B cell (primary cell): ENCODE measurements at regions of chr11 and their contacts with region 1.

Region 1: DNA sequence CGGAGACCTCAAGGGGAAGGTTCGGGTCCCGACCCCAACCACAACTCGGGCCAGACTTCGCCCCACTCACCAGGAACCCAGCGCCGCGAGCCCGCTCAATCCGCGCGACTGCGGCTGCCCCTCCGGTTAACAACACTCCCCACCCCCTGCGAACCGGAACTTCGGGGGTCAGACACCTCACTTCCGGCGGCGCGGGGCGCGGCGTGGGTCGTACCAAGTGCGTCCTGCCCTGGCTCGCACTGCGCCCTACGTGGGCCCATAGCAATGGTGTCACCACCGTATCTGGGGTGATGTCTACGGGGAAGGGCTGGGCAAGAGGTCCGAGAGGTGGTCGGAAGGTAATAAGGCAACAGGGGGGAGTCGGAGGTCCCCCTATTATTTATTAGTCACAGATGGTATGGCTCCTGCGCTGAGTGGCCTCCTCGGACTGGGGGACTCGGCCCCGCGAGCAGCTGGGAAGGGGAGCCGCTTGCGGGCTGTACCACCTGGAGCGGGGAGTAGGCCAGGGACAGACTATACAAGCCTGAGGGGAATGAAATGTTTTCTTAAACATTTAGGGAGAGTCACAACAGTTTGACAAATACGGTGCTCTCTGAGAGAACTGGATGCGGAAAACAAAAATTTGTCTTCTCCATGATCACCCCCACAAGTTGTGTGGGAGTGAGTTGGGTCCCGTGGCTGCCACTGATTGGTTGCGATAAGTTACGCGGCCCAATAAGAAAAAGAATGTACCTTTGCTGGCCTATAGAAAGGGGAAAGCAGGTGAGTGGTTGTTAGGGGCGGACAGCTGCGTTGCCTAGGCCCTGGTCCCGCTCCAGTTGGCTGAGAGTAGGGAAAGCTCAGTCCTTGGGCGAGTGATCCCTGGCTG is at the start of gene SYVN1:
- DNase-seq: peak; percentile 97
- ATAC-seq: peak; percentile 64
- H3K4me3 ChIP-seq: peak within 1 kb of the TSS; percentile 81 to 99 (median 96)
- H3K4me3 Mint-ChIP-seq: peak within 1 kb of the TSS; percentile 97
- H3K27ac ChIP-seq: peak within 1 kb of the TSS; percentile 98 to 99
- H3K27ac Mint-ChIP-seq: peak within 1 kb of the TSS; percentile 99
- H3K4me1 ChIP-seq: peaks cover 36 to 57% of the 10 kb centered on the region in 2 donors
- H3K4me1 Mint-ChIP-seq: peaks cover 66% of the 10 kb centered on the region
- H3K27me3 ChIP-seq: no peaks in the 10 kb centered on the region
- H3K27me3 Mint-ChIP-seq: no peaks in the 10 kb centered on the region
- CTCF ChIP-seq: no peak
- total RNA-seq, gene SYVN1: 187 and 188 TPM in 2 replicates

Region 2: DNA sequence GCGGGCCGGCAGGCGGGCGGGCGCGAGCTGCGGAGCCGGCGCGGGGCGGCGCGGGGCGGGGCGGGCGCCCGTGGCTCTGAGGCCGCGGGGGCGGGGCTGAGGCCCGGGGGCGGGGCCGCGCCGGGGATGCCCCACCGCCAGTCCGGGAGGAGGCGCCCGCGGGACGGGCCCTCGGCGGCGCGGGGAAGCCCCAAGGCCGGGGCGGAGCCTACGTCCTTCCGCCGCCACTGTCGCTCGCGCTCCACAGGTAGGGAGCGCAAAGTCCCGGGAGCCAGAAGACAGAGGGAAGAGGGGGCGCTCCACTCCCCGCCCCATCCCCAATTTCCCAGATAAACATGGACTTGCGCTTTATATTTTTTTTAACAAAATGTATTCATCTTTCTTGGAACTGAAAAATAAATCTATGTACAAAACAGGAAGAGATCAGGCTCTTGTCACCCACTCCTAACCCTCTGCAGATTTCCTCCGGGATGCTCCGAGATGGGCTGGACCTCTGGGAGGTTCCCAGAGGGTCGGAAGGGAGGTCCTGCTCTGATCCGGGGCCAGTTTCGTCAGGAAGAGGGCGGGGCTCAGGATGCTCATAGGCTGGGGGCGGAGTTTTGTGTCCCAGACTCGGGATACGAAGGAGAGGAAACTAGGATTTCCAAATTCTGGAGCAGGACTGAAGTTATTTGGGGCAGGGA is 331.3 kb before region 1 on chr11 and contains the start of gene MAP4K2:
- CTCF ChIA-PET with region 1: no interaction called
- POLR2A ChIA-PET with region 1: no interaction called
- intact Hi-C with region 1: loop called (anchors 5 kb)
- DNase-seq: peak; percentile 90
- ATAC-seq: peak; percentile 83
- H3K4me3 ChIP-seq: peak within 1 kb of the TSS; percentile 66 to 96 (median 71)
- H3K4me3 Mint-ChIP-seq: peak within 1 kb of the TSS; percentile 90
- H3K27ac ChIP-seq: peak within 1 kb of the TSS; percentile 74 to 90
- H3K27ac Mint-ChIP-seq: peak within 1 kb of the TSS; percentile 92
- H3K4me1 ChIP-seq: peaks cover 46 to 54% of the 10 kb centered on the region in 2 donors
- H3K4me1 Mint-ChIP-seq: peaks cover 45% of the 10 kb centered on the region
- H3K27me3 ChIP-seq: no peaks in the 10 kb centered on the region
- H3K27me3 Mint-ChIP-seq: no peaks in the 10 kb centered on the region
- CTCF ChIP-seq: no peak
- total RNA-seq, gene MAP4K2: 118 and 122 TPM in 2 replicates

Region 3: DNA sequence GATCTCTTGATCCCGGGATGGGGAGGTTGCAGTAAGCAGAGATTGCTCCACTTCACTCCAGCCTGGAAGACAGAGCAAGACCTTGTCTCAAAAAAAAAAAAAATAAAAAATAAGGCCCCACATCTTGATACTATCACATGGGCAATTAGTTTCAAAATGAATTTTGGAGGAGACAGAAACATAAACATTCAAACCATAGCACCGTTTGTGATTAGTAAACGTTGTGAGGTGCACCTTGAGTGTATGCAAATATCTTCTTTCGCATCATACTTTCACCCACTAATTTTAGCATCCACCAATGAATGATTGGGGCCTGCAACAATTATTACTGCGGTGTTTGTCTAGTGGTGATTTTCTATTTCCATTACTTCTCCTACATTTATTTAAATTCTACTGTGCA is 24.4 kb after region 1 on chr11:
- CTCF ChIA-PET with region 1: no interaction called
- POLR2A ChIA-PET with region 1: no interaction called
- intact Hi-C with region 1: no loop called
- DNase-seq: no peak
- ATAC-seq: no peak
- H3K4me3 ChIP-seq: no peak overlapping the region
- H3K4me3 Mint-ChIP-seq: no peak overlapping the region
- H3K27ac ChIP-seq: no peak overlapping the region
- H3K27ac Mint-ChIP-seq: no peak overlapping the region
- H3K4me1 ChIP-seq: peaks cover 0 to 8% of the 10 kb centered on the region in 2 donors
- H3K4me1 Mint-ChIP-seq: peaks cover 13% of the 10 kb centered on the region
- H3K27me3 ChIP-seq: no peaks in the 10 kb centered on the region
- H3K27me3 Mint-ChIP-seq: no peaks in the 10 kb centered on the region
- CTCF ChIP-seq: no peak

Region 4: GRCh38 chr11:65180877-65181568 is 46.4 kb after region 1 on chr11:
- CTCF ChIA-PET with region 1: interaction called, 64 read pairs
- POLR2A ChIA-PET with region 1: interaction called, 23 read pairs
- intact Hi-C with region 1: loop called (anchors 1 kb)
- DNase-seq: peak; percentile 87
- ATAC-seq: peak; percentile 84
- H3K4me3 ChIP-seq: peak overlapping the region; percentile 58 to 91 (median 80)
- H3K4me3 Mint-ChIP-seq: peak overlapping the region; percentile 97
- H3K27ac ChIP-seq: peak overlapping the region; percentile 58 to 64
- H3K27ac Mint-ChIP-seq: peak overlapping the region; percentile 96
- H3K4me1 ChIP-seq: peaks cover 16 to 24% of the 10 kb centered on the region in 2 donors
- H3K4me1 Mint-ChIP-seq: peaks cover 24% of the 10 kb centered on the region
- H3K27me3 ChIP-seq: no peaks in the 10 kb centered on the region
- H3K27me3 Mint-ChIP-seq: no peaks in the 10 kb centered on the region
- CTCF ChIP-seq: peak; percentile 61

Region 5: GRCh38 chr11:65279741-65280440 is 145.3 kb after region 1 on chr11:
- CTCF ChIA-PET with region 1: no interaction called
- POLR2A ChIA-PET with region 1: no interaction called
- intact Hi-C with region 1: no loop called
- DNase-seq: no peak
- ATAC-seq: no peak
- H3K4me3 ChIP-seq: no peak overlapping the region
- H3K4me3 Mint-ChIP-seq: no peak overlapping the region
- H3K27ac ChIP-seq: no peak overlapping the region
- H3K27ac Mint-ChIP-seq: no peak overlapping the region
- H3K4me1 ChIP-seq: peaks cover 0 to 5% of the 10 kb centered on the region in 2 donors
- H3K4me1 Mint-ChIP-seq: no peaks in the 10 kb centered on the region
- H3K27me3 ChIP-seq: no peaks in the 10 kb centered on the region
- H3K27me3 Mint-ChIP-seq: no peaks in the 10 kb centered on the region
- CTCF ChIP-seq: no peak

Region 6: GRCh38 chr11:66231561-66231960 is 1096.9 kb after region 1 on chr11:
- CTCF ChIA-PET with region 1: no interaction called
- POLR2A ChIA-PET with region 1: no interaction called
- intact Hi-C with region 1: no loop called
- DNase-seq: no peak
- ATAC-seq: no peak
- H3K4me3 ChIP-seq: no peak overlapping the region
- H3K4me3 Mint-ChIP-seq: no peak overlapping the region
- H3K27ac ChIP-seq: no peak overlapping the region
- H3K27ac Mint-ChIP-seq: no peak overlapping the region
- H3K4me1 ChIP-seq: no peaks in the 10 kb centered on the region
- H3K4me1 Mint-ChIP-seq: no peaks in the 10 kb centered on the region
- H3K27me3 ChIP-seq: no peaks in the 10 kb centered on the region
- H3K27me3 Mint-ChIP-seq: no peaks in the 10 kb centered on the region
- CTCF ChIP-seq: no peak